ENCODE measurements at regions of chr12 and their contacts with region 1.

Region 1: GRCh38 chr12:69900720-69901131 is 75.7 kb downstream of the MYRFL start:
- DNase-seq: peak; percentile 71 to 81
- H3K4me3 ChIP-seq: no peak overlapping the region
- H3K4me3 Mint-ChIP-seq: no peak overlapping the region
- H3K27ac Mint-ChIP-seq: no peak overlapping the region
- H3K4me1 ChIP-seq: no peaks in the 10 kb centered on the region
- H3K4me1 Mint-ChIP-seq: no peaks in the 10 kb centered on the region
- H3K27me3 ChIP-seq: no peaks in the 10 kb centered on the region
- H3K27me3 Mint-ChIP-seq: peaks cover 2% of the 10 kb centered on the region
- CTCF ChIP-seq: peak; percentile 60 to 89

Region 2: GRCh38 chr12:69822201-69822860 is 78.4 kb before region 1 on chr12:
- CTCF ChIA-PET with region 1: no interaction called
- POLR2A ChIA-PET with region 1: no interaction called
- intact Hi-C with region 1: no loop called
- DNase-seq: no peak
- H3K4me3 ChIP-seq: no peak overlapping the region
- H3K4me3 Mint-ChIP-seq: no peak overlapping the region
- H3K27ac Mint-ChIP-seq: no peak overlapping the region
- H3K4me1 ChIP-seq: no peaks in the 10 kb centered on the region
- H3K4me1 Mint-ChIP-seq: no peaks in the 10 kb centered on the region
- H3K27me3 ChIP-seq: no peaks in the 10 kb centered on the region
- H3K27me3 Mint-ChIP-seq: no peaks in the 10 kb centered on the region
- CTCF ChIP-seq: no peak

Region 3: DNA sequence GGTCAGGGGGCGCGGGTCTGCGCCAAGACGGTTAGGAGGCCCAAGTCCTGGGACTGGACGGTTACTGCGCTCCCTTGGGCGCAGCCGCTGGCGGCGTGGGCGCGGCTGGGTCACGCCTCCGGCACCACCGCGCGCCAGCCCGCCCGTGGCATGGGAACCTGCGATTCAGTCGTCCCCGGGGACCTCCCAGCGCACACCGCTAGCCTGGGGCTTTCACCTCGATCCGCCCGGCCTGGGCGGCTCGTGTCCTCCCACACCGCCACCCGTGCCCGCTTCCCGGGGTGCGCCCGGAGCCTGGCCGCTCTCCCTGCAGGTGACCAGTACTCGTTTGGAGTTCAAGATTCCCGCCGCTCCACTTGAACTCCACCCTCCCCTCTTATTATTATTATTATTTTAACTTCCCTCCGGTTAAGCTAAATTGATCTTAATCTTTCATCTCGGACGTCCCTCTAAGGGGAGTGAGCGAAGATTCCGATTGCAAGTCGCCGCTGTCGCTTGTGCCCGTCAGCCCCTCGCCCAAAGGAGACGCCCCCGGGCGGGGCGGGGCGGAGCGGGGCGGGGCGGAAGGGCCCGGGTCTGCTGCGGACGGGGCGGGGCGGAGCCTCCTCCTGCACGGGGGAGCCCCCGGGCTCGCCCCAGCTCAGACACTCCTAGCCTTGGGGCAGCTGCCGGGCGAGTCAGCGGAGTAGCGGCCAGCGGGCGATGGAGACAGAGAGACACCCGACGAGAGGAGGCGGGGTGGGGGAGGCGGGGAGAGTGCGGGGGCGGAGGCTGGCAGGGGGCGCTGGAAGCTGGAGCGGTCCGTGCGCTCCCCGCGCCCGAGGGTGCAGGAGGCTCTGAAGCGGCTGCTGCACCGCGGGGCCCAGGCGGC is 465.2 kb after region 1 on chr12 and contains the start of gene KCNMB4:
- CTCF ChIA-PET with region 1: no interaction called
- POLR2A ChIA-PET with region 1: no interaction called
- intact Hi-C with region 1: loop called (anchors 10 kb)
- DNase-seq: peak; percentile 69 to 83
- H3K4me3 ChIP-seq: peak within 1 kb of the TSS; percentile 53
- H3K4me3 Mint-ChIP-seq: peak within 1 kb of the TSS; percentile 94
- H3K27ac Mint-ChIP-seq: peak within 1 kb of the TSS; percentile 58
- H3K4me1 ChIP-seq: peaks cover 10% of the 10 kb centered on the region; the same call in 1 of the 2 replicates
- H3K4me1 Mint-ChIP-seq: no peaks in the 10 kb centered on the region
- H3K27me3 ChIP-seq: no peaks in the 10 kb centered on the region
- H3K27me3 Mint-ChIP-seq: peaks cover 11% of the 10 kb centered on the region
- CTCF ChIP-seq: no peak
- total RNA-seq, gene KCNMB4: 0.23 TPM in 1 of 2 replicates, not detected in the other